Activated CD8-positive, alpha-beta T cell treated with anti-CD3 and anti-CD28 coated beads, Interleukin-2, amount 10 ng/mL, durations not matched to agents 7 days and 5 days (primary cell): ENCODE measurements at regions of chr1 and their contacts with region 1.

Region 1: DNA sequence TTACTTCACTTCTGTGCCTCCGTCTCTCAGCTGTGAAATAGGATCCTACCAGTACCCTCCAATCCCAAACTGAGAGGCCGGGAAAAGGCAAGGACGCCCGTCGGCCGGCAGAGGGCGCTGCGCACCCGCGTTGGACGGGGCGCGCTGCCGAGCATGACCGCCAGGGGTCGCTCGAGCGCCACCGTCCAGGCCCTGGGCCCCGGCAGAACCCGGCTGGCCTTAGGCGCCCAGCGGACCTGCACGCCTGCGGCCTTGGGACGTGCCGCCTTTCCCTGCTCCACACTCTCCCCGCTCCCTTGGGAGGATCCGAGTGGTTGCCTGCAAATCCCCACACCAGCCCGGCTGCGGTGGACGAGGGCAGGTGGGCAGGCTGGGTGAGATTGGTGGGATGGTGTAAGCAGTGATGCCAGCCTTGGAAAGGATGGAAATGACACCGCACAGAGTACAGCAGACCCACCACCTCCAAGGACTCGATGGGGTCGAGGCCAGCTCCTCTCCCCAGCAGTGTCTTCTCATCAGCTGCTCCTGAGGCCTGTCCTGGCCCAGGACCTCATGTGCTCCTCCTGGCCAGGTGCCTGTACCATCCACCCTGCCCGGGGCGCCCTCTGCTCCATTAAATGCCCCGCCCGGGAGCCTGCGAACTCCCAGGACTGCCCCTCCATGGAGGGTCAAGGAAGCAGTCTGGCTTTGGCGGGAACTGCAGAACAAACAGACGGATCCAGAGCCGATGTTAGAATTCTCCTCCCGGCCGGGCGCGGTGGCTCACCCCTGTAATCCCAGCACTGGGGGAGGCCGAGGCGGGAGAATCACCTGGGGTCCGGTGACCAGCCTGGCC is 47.4 kb upstream of the LBR start:
- DNase-seq: peak; percentile 69
- ATAC-seq: peak; percentile 74
- H3K4me3 Mint-ChIP-seq: no peak overlapping the region
- H3K27ac Mint-ChIP-seq: no peak overlapping the region
- H3K4me1 Mint-ChIP-seq: peaks cover 51% of the 10 kb centered on the region
- H3K27me3 Mint-ChIP-seq: peaks cover 5% of the 10 kb centered on the region

Region 2: DNA sequence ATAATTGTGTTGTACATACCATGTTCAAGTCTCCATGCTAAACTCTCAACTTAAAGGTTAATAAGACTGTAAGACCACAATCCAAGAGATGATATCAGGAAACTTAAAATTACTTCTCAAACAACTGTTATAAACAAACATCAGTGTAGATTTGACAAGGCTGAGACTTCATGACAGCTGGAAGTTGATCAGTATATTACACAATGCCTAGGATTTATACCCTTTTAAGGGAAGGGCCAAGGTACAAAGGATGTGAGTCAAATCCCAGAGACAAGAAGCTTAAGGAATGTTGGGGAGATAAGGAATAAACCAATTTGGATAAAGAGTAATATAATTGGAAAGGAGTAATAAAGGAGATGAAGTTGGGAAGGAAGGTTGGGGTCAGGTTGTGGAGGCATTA is 146.2 kb before region 1 on chr1:
- CTCF ChIA-PET with region 1: no interaction called
- POLR2A ChIA-PET with region 1: no interaction called
- DNase-seq: no peak
- ATAC-seq: no peak
- H3K4me3 Mint-ChIP-seq: no peak overlapping the region
- H3K27ac Mint-ChIP-seq: no peak overlapping the region
- H3K4me1 Mint-ChIP-seq: no peaks in the 10 kb centered on the region
- H3K27me3 Mint-ChIP-seq: peaks cover 2% of the 10 kb centered on the region

Region 3: GRCh38 chr1:225441314-225442122 is 33.7 kb before region 1 on chr1:
- CTCF ChIA-PET with region 1: interaction called, 21 read pairs
- POLR2A ChIA-PET with region 1: interaction called, 135 read pairs
- DNase-seq: no peak
- ATAC-seq: no peak
- H3K4me3 Mint-ChIP-seq: peak overlapping the region; percentile 55
- H3K27ac Mint-ChIP-seq: peak overlapping the region; percentile 75
- H3K4me1 Mint-ChIP-seq: peaks cover 54% of the 10 kb centered on the region
- H3K27me3 Mint-ChIP-seq: no peaks in the 10 kb centered on the region

Region 4: DNA sequence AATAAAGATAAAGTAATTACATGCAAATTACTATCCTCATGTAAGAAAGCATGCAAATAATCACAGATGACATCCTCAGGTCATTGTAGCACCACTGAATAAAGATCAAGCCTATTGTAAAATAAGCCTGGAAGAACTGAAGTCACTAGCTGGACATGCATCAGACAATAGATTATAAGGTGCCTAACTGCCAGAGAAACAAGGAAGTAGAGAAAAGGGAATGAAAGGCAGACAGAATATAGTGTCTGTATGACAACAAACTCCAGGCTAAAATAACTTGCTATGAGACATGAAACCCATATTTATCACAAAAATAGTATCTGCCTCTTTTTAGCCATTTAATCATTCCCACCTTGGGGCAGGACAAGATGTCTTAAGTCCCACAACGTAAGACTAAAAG is 69.1 kb after region 1 on chr1:
- CTCF ChIA-PET with region 1: interaction called, 12 read pairs
- POLR2A ChIA-PET with region 1: no interaction called
- DNase-seq: no peak
- ATAC-seq: no peak
- H3K4me3 Mint-ChIP-seq: no peak overlapping the region
- H3K27ac Mint-ChIP-seq: no peak overlapping the region
- H3K4me1 Mint-ChIP-seq: peaks cover 16% of the 10 kb centered on the region
- H3K27me3 Mint-ChIP-seq: peaks cover 3% of the 10 kb centered on the region

Region 5: GRCh38 chr1:225977937-225978748 is 502.9 kb after region 1 on chr1:
- CTCF ChIA-PET with region 1: interaction called, 19 read pairs
- POLR2A ChIA-PET with region 1: interaction called, 7 read pairs
- DNase-seq: no peak
- ATAC-seq: no peak
- H3K4me3 Mint-ChIP-seq: no peak overlapping the region
- H3K27ac Mint-ChIP-seq: no peak overlapping the region
- H3K4me1 Mint-ChIP-seq: peaks cover 13% of the 10 kb centered on the region
- H3K27me3 Mint-ChIP-seq: no peaks in the 10 kb centered on the region